ENCODE measurements at regions of chr6 and their contacts with region 1.

Region 1: GRCh38 chr6:39892490-39893129 is 41.7 kb downstream of the MOCS1 start:
- DNase-seq: peak; percentile 72
- H3K4me3 Mint-ChIP-seq: no peak overlapping the region
- H3K27ac Mint-ChIP-seq: no peak overlapping the region
- H3K4me1 Mint-ChIP-seq: no peaks in the 10 kb centered on the region
- H3K27me3 Mint-ChIP-seq: peaks cover 44% of the 10 kb centered on the region
- CTCF ChIP-seq: peak; percentile 56

Region 2: GRCh38 chr6:39347906-39348585 is 544.6 kb before region 1 on chr6:
- CTCF ChIA-PET with region 1: no interaction called
- intact Hi-C with region 1: loop called (anchors 5 kb)
- DNase-seq: peak; percentile 83
- H3K4me3 Mint-ChIP-seq: no peak overlapping the region
- H3K27ac Mint-ChIP-seq: no peak overlapping the region
- H3K4me1 Mint-ChIP-seq: no peaks in the 10 kb centered on the region
- H3K27me3 Mint-ChIP-seq: peaks cover 85% of the 10 kb centered on the region
- CTCF ChIP-seq: peak; percentile 94

Region 3: DNA sequence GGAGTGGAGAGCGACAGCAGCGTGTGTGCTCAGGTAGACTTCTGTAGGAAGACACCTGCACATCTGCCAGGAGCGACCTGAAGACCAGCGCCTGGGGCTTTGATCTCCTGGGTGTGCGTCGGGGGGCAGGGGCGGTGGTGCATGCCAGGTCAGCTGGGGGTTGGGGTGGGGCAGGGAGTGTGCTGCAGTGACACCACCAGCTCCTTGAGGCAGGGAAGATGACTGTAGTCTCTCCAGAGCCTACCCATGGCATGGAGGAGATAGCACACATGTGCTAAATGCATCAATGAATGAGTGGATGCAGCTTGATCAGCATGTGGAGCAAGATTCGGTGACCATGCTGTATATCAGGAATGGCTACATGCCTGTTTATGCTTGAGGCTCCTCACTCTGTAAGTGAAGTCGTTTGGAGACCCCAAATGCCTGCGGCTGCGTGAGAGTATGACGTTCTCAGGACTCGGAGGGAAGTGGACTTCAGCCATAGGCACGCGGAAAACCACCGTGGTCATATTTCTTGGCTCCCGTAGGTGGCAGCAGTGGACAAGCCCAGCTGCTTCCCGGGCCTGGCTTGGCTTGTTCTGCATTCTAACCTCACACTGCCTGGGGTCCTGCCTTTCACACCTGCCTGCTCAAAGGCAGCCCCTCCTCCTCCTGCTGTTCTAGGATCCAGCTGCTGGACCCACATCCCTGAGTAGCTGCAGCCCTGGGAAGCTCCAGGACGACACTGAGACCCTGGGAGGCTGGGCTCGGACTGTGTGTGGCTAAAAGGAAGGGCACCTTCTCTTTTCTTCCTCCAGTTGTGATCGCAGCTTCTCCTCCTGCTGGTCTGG is 530.7 kb before region 1 on chr6:
- CTCF ChIA-PET with region 1: interaction called, 3 read pairs
- intact Hi-C with region 1: loop called (anchors 5 kb)
- DNase-seq: peak; percentile 84
- H3K4me3 Mint-ChIP-seq: peak overlapping the region; percentile 20
- H3K27ac Mint-ChIP-seq: no peak overlapping the region
- H3K4me1 Mint-ChIP-seq: peaks cover 13% of the 10 kb centered on the region
- H3K27me3 Mint-ChIP-seq: peaks cover 44% of the 10 kb centered on the region
- CTCF ChIP-seq: peak; percentile 73

Region 4: DNA sequence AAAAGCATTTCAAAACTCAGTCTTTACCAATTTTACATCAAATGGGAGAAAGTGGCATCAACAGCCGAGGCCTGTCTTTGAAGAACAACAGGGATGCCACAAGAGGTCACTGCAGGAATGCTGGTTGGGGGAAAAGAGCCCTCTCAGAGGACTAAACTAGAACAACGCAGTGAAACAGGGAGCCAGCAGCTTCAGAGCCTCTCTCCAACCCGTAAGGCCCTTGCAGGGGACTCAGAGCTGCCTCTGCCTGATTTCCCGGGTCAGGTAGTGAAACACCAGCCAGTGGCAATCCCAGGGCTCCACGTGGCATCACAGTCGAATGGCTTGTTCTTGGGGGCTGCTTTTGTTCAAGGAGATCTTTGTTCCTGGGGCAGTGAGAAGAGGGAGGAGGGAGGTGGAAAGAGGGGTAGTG is 515.1 kb before region 1 on chr6:
- CTCF ChIA-PET with region 1: no interaction called
- intact Hi-C with region 1: loop called (anchors 1 kb)
- DNase-seq: peak; percentile 59
- H3K4me3 Mint-ChIP-seq: no peak overlapping the region
- H3K27ac Mint-ChIP-seq: no peak overlapping the region
- H3K4me1 Mint-ChIP-seq: no peaks in the 10 kb centered on the region
- H3K27me3 Mint-ChIP-seq: peaks cover 78% of the 10 kb centered on the region
- CTCF ChIP-seq: peak; percentile 42

Region 5: GRCh38 chr6:39653612-39654011 is 239.0 kb before region 1 on chr6:
- CTCF ChIA-PET with region 1: no interaction called
- intact Hi-C with region 1: no loop called
- DNase-seq: no peak
- H3K4me3 Mint-ChIP-seq: no peak overlapping the region
- H3K27ac Mint-ChIP-seq: no peak overlapping the region
- H3K4me1 Mint-ChIP-seq: no peaks in the 10 kb centered on the region
- H3K27me3 Mint-ChIP-seq: peaks cover 7% of the 10 kb centered on the region
- CTCF ChIP-seq: no peak

Region 6: GRCh38 chr6:39975765-39976164 is 83.2 kb after region 1 on chr6:
- CTCF ChIA-PET with region 1: no interaction called
- intact Hi-C with region 1: no loop called
- DNase-seq: no peak
- H3K4me3 Mint-ChIP-seq: no peak overlapping the region
- H3K27ac Mint-ChIP-seq: no peak overlapping the region
- H3K4me1 Mint-ChIP-seq: no peaks in the 10 kb centered on the region
- H3K27me3 Mint-ChIP-seq: peaks cover 25% of the 10 kb centered on the region
- CTCF ChIP-seq: no peak

Region 7: DNA sequence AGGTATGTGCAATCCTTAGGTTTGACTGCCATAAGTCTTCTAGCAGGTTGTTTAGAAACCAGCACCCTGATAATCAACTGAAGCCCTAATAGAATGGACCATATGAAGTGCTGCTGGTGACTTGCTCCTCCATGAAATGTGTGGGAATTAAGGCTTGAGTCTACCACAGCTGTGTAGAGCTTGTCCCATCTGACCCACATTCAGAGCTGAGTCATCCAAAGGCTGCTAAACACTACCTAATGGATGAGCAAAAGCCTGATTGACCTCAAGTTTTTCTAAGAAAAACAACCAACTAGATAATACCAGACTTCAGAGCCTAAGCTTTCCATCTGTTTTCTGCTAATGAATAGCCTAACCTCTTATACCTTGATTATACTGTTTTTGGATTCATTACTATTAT is 162.0 kb after region 1 on chr6:
- CTCF ChIA-PET with region 1: no interaction called
- intact Hi-C with region 1: no loop called
- DNase-seq: no peak
- H3K4me3 Mint-ChIP-seq: no peak overlapping the region
- H3K27ac Mint-ChIP-seq: no peak overlapping the region
- H3K4me1 Mint-ChIP-seq: no peaks in the 10 kb centered on the region
- H3K27me3 Mint-ChIP-seq: no peaks in the 10 kb centered on the region
- CTCF ChIP-seq: no peak

Measured in Calu3 (cell line).